Activated CD4-positive, alpha-beta T cell treated with anti-CD3 and anti-CD28 coated beads, Interleukin-2, amount 10 ng/mL, durations not matched to agents 7 days and 5 days (primary cell): ENCODE measurements at regions of chr3 and their contacts with region 1.

Region 1: GRCh38 chr3:40309418-40309924 is at the start of gene EIF1B:
- DNase-seq: peak; percentile 98
- H3K4me3 Mint-ChIP-seq: peak within 1 kb of the TSS; percentile 96
- H3K27ac Mint-ChIP-seq: peak within 1 kb of the TSS; percentile 98
- H3K4me1 Mint-ChIP-seq: peaks cover 25% of the 10 kb centered on the region
- H3K27me3 Mint-ChIP-seq: no peaks in the 10 kb centered on the region
- total RNA-seq, gene EIF1B: 35.0 to 37.5 TPM

Region 2: DNA sequence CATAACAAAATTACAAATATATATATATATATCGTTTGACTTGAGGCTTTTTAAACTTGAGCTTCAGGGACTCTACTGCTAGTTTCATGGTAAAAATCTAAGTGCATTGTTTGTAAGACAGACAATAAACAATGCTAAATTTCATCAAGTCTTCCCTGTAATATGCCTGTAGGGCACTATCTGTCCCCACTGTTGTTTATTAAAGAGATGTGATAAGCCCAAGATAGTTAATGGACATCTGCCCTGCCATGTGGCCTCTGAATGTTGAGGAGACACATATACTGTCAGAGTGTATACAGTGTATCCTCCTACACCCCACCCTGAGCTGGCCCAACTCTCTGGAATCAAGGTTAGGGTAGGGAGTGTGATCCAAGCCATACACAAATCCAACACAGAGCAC is 15.0 kb before region 1 on chr3:
- CTCF ChIA-PET with region 1: interaction called, 14 read pairs
- POLR2A ChIA-PET with region 1: no interaction called
- DNase-seq: no peak
- H3K4me3 Mint-ChIP-seq: no peak overlapping the region
- H3K27ac Mint-ChIP-seq: no peak overlapping the region
- H3K4me1 Mint-ChIP-seq: no peaks in the 10 kb centered on the region
- H3K27me3 Mint-ChIP-seq: no peaks in the 10 kb centered on the region

Region 3: DNA sequence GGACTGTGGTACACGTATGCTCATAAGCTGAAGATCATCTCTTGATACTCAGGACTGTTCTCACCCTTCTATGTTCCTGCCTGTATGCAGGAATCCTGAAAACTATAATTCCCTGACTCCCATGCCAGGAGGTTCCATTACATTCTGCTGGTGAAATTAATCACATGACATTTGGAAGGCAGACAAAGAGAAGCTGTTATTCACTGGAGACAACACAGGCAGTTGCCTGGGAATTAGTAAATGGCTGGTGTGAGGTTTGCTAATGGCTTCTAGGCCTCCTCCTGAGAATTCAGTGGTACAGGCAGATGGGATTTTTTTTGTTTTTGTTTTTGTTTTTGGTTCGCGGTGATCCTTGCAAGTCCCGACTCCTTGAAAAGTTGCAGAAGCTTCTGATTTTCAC is 981.3 kb after region 1 on chr3:
- CTCF ChIA-PET with region 1: no interaction called
- POLR2A ChIA-PET with region 1: no interaction called
- DNase-seq: no peak
- H3K4me3 Mint-ChIP-seq: no peak overlapping the region
- H3K27ac Mint-ChIP-seq: no peak overlapping the region
- H3K4me1 Mint-ChIP-seq: no peaks in the 10 kb centered on the region
- H3K27me3 Mint-ChIP-seq: no peaks in the 10 kb centered on the region